PC-3 (cell line): ENCODE measurements at regions of chr6 and their contacts with region 1.

Region 1: DNA sequence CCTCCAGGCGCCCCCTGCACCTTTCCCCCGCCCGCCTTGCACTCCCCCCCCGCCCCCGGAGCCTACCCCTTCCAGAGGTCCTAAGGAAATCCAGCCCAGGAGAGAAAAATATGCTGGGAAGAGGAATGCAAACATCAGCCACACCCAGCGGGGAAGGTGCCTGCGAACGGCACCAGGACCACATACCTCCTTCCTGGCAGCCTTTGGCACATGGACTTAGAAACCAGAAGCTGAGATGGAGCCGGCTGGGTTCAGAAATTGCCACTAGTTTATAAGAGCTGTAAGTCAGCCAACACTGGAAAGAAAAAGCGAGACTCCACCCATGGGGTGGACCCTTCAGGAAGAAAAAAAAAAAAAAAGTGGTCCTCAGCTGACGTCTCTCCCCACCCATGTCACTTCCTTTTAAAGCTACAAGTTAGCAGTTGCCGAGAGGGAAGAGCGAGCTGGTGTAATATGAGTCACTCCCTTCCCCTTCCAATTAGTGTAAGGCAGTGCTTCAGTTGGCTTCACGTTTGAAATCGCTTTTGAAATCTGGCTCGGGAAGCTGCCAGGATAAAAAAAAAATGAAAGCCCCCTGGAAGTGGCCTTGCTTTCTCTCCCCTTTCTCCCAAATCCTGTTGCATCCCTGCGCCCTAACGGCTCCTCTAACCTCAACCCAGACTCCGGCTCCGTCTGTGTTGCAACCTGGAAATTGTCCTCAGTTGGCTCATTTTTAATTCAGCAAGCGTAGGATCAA is at the start of gene AGPAT4:
- DNase-seq: peak; percentile 89
- ATAC-seq: peak; percentile 88
- H3K4me3 ChIP-seq: peak within 1 kb of the TSS; percentile 85
- H3K27ac ChIP-seq: peak within 1 kb of the TSS; percentile 66
- H3K4me1 ChIP-seq: peaks cover 29% of the 10 kb centered on the region
- H3K27me3 ChIP-seq: no peaks in the 10 kb centered on the region
- CTCF ChIP-seq: no peak
- total RNA-seq, gene AGPAT4: 3.8 and 3.9 TPM in 2 replicates

Region 2: DNA sequence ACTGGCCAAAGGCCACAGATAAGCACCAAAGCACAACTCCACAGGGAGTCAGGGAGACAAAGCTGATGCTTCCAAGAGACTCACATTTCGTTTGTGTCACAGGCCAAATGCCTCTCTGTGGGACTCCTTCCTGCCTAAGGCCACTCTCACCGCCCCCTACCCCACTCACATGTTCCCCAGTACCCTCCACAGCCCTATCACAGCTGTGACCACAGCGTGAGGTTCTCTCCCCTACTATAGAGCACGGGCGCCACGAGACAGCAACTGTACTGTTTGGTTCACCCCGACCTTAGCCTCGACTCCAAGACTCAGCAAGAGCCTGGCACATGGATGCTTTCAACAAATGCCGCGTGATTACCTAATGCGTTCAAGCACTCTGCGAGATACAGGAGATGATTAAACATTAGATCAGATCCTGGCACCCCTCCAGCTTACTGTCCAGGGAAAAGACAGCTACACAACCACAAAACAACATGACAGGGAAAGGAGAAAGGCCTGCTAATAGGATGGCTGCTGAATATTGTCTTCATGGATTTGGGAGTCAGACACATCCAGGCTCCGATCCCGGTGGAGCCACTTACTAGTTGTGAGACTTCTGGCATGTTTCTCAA is 105.5 kb before region 1 on chr6:
- CTCF ChIA-PET with region 1: no interaction called
- POLR2A ChIA-PET with region 1: no interaction called
- intact Hi-C with region 1: loop called (anchors 5 kb)
- DNase-seq: peak; percentile 96
- ATAC-seq: peak; percentile 92
- H3K4me3 ChIP-seq: no peak overlapping the region
- H3K27ac ChIP-seq: peak overlapping the region; percentile 78
- H3K4me1 ChIP-seq: peaks cover 15% of the 10 kb centered on the region
- H3K27me3 ChIP-seq: no peaks in the 10 kb centered on the region
- CTCF ChIP-seq: no peak

Region 3: GRCh38 chr6:161228921-161229591 is 44.9 kb before region 1 on chr6:
- CTCF ChIA-PET with region 1: no interaction called
- POLR2A ChIA-PET with region 1: no interaction called
- intact Hi-C with region 1: loop called (anchors 5 kb)
- DNase-seq: peak; percentile 70
- ATAC-seq: peak; percentile 96
- H3K4me3 ChIP-seq: peak overlapping the region; percentile 52; the same call in 1 of the 2 replicates
- H3K27ac ChIP-seq: peak overlapping the region; percentile 88
- H3K4me1 ChIP-seq: peaks cover 15% of the 10 kb centered on the region
- H3K27me3 ChIP-seq: no peaks in the 10 kb centered on the region
- CTCF ChIP-seq: no peak

Region 4: GRCh38 chr6:161292145-161292544 is 18.2 kb after region 1 on chr6:
- CTCF ChIA-PET with region 1: no interaction called
- POLR2A ChIA-PET with region 1: no interaction called
- intact Hi-C with region 1: no loop called
- DNase-seq: no peak
- ATAC-seq: no peak
- H3K4me3 ChIP-seq: no peak overlapping the region
- H3K27ac ChIP-seq: no peak overlapping the region
- H3K4me1 ChIP-seq: no peaks in the 10 kb centered on the region
- H3K27me3 ChIP-seq: no peaks in the 10 kb centered on the region
- CTCF ChIP-seq: no peak